ENCODE measurements at regions of chr21 and their contacts with region 1.

Region 1: DNA sequence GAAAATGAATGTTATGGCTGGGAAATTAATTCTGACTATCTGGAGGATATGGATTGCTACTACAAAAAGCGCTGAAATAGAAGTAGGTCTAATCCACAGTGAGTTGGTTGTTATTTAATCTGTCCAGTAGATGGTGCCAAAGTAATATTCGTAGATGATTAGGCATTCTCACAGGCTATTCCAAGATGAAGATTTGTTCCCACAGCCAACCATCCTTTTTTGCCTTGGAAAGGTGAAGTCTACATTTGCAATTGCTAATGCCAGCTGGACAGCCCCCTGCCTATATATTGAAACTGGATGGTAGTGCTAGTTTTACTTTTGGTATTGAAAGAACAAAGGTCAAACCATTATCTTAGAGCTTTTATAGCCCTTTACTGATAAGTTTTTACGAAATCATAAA is 43.8 kb downstream of the RBM11 start:
- DNase-seq: no peak
- H3K4me3 ChIP-seq: no peak overlapping the region
- H3K27ac ChIP-seq: no peak overlapping the region
- H3K27me3 ChIP-seq: peaks cover 0 to 5% (median 0%) of the 10 kb centered on the region in 45 donors
- CTCF ChIP-seq: peak in 55 of 56 donors; percentile 32 to 86 (median 67)

Region 2: DNA sequence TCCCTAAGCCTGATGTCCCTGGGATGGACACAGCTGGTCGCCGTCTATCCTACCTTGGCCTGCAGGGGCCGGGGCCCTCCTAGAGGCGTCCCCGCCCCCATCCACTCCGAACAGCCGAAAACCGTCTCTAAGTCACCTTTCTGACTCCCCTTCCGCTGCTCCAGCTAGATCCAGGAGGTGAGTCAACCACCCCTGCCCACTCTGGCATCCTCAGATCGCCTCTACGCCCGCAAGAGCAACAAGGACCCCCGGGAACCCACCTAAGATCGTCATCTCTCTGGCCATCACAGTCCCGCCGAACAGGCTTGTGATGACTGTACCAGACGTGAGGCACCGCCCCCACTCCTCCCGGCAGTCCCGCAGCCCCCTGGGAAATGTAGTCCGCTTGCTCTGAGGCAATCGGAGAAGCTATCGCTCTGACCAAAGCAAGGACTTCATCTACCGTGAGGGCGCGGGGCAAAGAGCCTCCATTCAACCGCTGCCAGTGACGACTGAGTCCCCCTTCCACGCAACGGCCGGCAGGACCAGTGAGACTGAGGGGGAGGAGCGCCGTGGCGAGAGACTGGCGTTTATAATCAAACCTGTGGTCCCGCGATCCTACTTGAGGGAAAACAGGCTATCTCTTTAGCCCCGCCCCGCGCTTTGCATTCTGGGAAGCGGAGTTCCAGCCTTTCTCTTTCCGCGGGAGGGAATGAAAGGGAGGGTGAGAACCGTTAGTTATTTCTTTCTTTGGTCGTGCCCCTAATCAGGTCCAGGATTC is 123.3 kb after region 1 on chr21 and contains the start of gene HSPA13:
- intact Hi-C with region 1: loop called in 1 of 2 experiments (anchors 2 kb)
- DNase-seq: peak; percentile 100
- H3K4me3 ChIP-seq: peak within 1 kb of the TSS; percentile 67 to 99 (median 87)
- H3K27ac ChIP-seq: peak within 1 kb of the TSS; percentile 63 to 98 (median 95)
- H3K27me3 ChIP-seq: no peaks in the 10 kb centered on the region
- CTCF ChIP-seq: peak in 29 of 56 donors; percentile 7 to 50 (median 27)
- total RNA-seq, gene HSPA13: 27.8 to 86.2 (median 52.1) TPM

Region 3: GRCh38 chr21:14418920-14419319 is 159.2 kb after region 1 on chr21:
- intact Hi-C with region 1: no loop called
- DNase-seq: no peak
- H3K4me3 ChIP-seq: no peak overlapping the region
- H3K27ac ChIP-seq: no peak overlapping the region
- H3K27me3 ChIP-seq: peaks cover 0 to 7% (median 0%) of the 10 kb centered on the region in 45 donors
- CTCF ChIP-seq: no peak

Region 4: GRCh38 chr21:14864211-14865021 is 604.7 kb after region 1 on chr21:
- intact Hi-C with region 1: loop called in 1 of 2 experiments (anchors 10 kb)
- DNase-seq: peak; percentile 60 to 86 (median 80)
- H3K4me3 ChIP-seq: peak overlapping the region in 4 of 59 donors; percentile 5 to 32 (median 18)
- H3K27ac ChIP-seq: peak overlapping the region in 57 of 59 donors; percentile 20 to 91 (median 76)
- H3K27me3 ChIP-seq: no peaks in the 10 kb centered on the region
- CTCF ChIP-seq: peak in 54 of 56 donors; percentile 37 to 85 (median 68)

Region 5: GRCh38 chr21:15592271-15592860 is 1332.6 kb after region 1 on chr21:
- intact Hi-C with region 1: loop called (anchors 5 to 10 kb)
- DNase-seq: no peak
- H3K4me3 ChIP-seq: no peak overlapping the region
- H3K27ac ChIP-seq: no peak overlapping the region
- H3K27me3 ChIP-seq: no peaks in the 10 kb centered on the region
- CTCF ChIP-seq: peak; percentile 33 to 89 (median 71)